PC-9 (cell line): ENCODE measurements at regions of chr17 and their contacts with region 1.

Region 1: GRCh38 chr17:30344283-30345088 is 10.6 kb upstream of the TMIGD1 start:
- DNase-seq: peak; percentile 68 to 98
- H3K4me3 ChIP-seq: peak overlapping the region; percentile 33; the same call in 1 of the 2 replicates
- H3K27ac ChIP-seq: peak overlapping the region; percentile 96
- H3K4me1 ChIP-seq: peaks cover 64% of the 10 kb centered on the region
- H3K27me3 ChIP-seq: no peaks in the 10 kb centered on the region
- CTCF ChIP-seq: no peak

Region 2: DNA sequence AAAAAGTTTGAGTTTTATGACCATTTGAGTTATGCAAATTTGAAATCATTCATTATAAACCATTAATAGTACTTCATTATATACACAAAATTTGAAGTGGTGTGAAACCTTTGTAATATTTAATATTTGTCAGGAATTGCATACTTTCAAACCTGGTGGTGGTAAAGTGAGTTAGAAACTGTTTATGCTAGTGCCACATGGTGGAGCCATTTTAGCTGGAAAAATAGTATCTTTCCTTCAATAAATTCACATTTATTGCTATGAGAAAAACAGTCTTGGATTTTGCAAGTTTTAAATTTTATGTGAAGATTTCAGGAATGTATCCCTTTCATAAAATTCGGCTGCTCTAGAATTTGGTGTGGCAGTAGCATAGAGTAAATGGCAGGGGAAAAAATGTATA is 45.5 kb before region 1 on chr17:
- CTCF ChIA-PET with region 1: no interaction called
- POLR2A ChIA-PET with region 1: no interaction called
- intact Hi-C with region 1: no loop called
- DNase-seq: no peak
- H3K4me3 ChIP-seq: no peak overlapping the region
- H3K27ac ChIP-seq: no peak overlapping the region
- H3K4me1 ChIP-seq: peaks cover 6% of the 10 kb centered on the region
- H3K27me3 ChIP-seq: no peaks in the 10 kb centered on the region
- CTCF ChIP-seq: peak; percentile 50

Region 3: DNA sequence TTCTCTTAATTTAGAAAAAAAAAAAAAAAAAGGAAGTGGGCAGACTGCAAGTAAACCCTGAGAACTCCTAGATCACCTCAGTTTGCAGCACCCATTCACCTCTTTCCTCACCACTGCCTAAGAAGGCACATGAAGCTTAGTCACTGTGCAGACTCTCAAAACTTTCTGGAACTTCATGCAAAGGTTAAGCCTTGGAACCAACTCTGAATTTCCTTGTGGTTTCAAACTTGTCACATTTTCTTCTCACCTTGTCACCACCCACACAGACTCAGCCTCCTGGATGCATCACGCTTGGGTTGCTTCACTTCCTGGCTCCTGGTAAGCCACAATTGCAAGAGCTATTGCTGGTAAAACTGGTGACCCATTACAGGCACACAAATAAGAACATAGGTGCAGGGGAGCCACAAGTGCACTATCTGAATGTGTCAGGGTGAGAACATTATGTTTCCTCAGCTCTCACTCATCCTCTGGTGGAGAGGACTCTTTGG is 19.3 kb after region 1 on chr17:
- CTCF ChIA-PET with region 1: interaction called, 10 read pairs
- POLR2A ChIA-PET with region 1: interaction called, 3 read pairs
- intact Hi-C with region 1: no loop called
- DNase-seq: peak; percentile 54 to 98
- H3K4me3 ChIP-seq: no peak overlapping the region
- H3K27ac ChIP-seq: peak overlapping the region; percentile 96
- H3K4me1 ChIP-seq: peaks cover 36% of the 10 kb centered on the region
- H3K27me3 ChIP-seq: no peaks in the 10 kb centered on the region
- CTCF ChIP-seq: no peak

Region 4: GRCh38 chr17:30477083-30477773 is 132.7 kb after region 1 on chr17 and contains the start of gene GOSR1:
- CTCF ChIA-PET with region 1: interaction called, 10 read pairs
- POLR2A ChIA-PET with region 1: no interaction called
- intact Hi-C with region 1: loop called (anchors 1 kb)
- DNase-seq: peak; percentile 86
- H3K4me3 ChIP-seq: peak within 1 kb of the TSS; percentile 98
- H3K27ac ChIP-seq: peak within 1 kb of the TSS; percentile 45; the same call in 1 of the 2 replicates
- H3K4me1 ChIP-seq: peaks cover 11% of the 10 kb centered on the region
- H3K27me3 ChIP-seq: no peaks in the 10 kb centered on the region
- CTCF ChIP-seq: peak; percentile 78
- total RNA-seq, gene GOSR1: 30.1 and 43.7 TPM in 2 replicates

Region 5: GRCh38 chr17:30600049-30600829 is 255.8 kb after region 1 on chr17:
- CTCF ChIA-PET with region 1: no interaction called
- POLR2A ChIA-PET with region 1: no interaction called
- intact Hi-C with region 1: loop called (anchors 5 kb)
- DNase-seq: peak; percentile 59 to 84
- H3K4me3 ChIP-seq: peak overlapping the region; percentile 61
- H3K27ac ChIP-seq: peak overlapping the region; percentile 35; the same call in 1 of the 2 replicates
- H3K4me1 ChIP-seq: peaks cover 21% of the 10 kb centered on the region
- H3K27me3 ChIP-seq: no peaks in the 10 kb centered on the region
- CTCF ChIP-seq: peak; percentile 71